ENCODE measurements at regions of chr4 and their contacts with region 1.

Region 1: GRCh38 chr4:185039508-185040273 is 21.4 kb downstream of the HELT start:
- DNase-seq: peak; percentile 52 to 71 (median 66)
- ATAC-seq: peak; percentile 88
- H3K4me3 ChIP-seq: no peak overlapping the region
- H3K27ac ChIP-seq: no peak overlapping the region
- H3K4me1 ChIP-seq: peaks cover 6% of the 10 kb centered on the region
- H3K27me3 ChIP-seq: no peaks in the 10 kb centered on the region
- CTCF ChIP-seq: peak; percentile 72 to 90 (median 86)
- POLR2A ChIP-seq: no peak

Region 2: DNA sequence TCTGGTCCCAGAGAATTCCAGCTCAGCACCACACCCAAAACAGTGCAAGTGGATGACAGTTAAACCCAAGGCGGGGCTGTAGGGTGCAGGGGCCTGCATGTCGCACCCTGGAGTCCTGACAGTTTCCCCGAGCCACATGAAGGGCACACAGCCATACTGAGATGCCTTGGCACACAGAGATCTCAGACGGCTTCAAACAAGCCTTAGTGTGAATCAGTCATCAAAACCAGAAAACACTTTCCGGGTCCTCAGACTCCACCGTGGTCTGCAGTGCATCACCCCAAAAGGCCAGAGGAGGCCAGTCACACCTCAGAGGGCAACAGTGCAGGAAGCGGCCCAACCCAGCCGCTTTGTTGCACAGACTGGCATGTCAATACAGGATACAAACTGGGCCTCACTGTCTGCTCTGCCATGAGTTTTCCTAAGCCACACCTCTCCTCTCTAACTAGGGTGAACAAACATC is 757.4 kb before region 1 on chr4:
- intact Hi-C with region 1: no loop called
- DNase-seq: peak in 1 of 4 donors; percentile 28
- ATAC-seq: peak; percentile 55
- H3K4me3 ChIP-seq: no peak overlapping the region
- H3K27ac ChIP-seq: no peak overlapping the region
- H3K4me1 ChIP-seq: peaks cover 6% of the 10 kb centered on the region
- H3K27me3 ChIP-seq: no peaks in the 10 kb centered on the region
- CTCF ChIP-seq: peak in 1 of 7 experiments; percentile 6
- POLR2A ChIP-seq: no peak

Region 3: DNA sequence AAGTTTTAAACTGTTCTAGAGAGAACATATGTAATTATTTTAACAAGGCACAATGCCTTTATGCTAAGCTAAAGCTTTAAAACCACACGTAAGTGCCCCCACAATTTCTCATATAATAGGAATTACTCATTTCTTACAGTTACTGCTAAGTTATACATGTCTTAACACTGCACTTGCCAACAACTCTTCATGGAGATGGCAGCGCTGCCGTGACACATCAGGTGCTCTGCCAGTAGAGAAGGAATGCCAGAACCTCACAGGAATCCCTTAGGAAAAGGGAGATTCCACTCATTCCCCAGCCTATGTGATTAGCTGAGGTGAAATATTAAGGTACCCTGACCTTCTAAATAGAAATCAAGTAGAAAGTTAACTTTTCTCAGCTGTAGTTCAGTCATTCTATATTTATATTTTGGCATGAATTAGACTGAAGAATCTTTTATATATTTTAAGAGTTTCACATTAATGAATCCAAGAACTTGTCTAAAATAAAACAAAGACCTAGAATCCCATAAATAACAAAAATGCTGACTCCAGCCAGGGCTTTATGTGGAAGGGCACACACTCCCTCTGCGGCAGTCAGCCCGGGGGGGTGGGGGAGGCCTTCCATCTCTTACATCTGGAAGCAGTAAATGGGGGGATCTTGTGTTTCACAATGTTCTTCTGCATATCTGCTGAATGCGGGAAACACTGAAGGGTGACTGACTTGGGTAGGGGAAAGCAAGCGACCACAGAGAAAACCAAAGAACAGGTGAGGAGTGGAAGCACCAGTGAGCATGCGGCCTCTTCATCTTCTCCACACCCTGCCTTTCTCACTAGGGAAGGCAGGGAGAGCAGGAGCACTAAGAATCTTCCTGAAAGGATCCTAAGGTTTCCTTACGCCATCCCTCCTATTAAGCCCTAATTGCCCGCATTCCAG is 237.7 kb before region 1 on chr4:
- intact Hi-C with region 1: no loop called
- DNase-seq: no peak
- ATAC-seq: no peak
- H3K4me3 ChIP-seq: no peak overlapping the region
- H3K27ac ChIP-seq: no peak overlapping the region
- H3K4me1 ChIP-seq: peaks cover 35% of the 10 kb centered on the region
- H3K27me3 ChIP-seq: no peaks in the 10 kb centered on the region
- CTCF ChIP-seq: no peak
- POLR2A ChIP-seq: no peak

Region 4: GRCh38 chr4:185096032-185096653 is 56.5 kb after region 1 on chr4:
- intact Hi-C with region 1: loop called (anchors 10 kb)
- DNase-seq: peak; percentile 58 to 70 (median 64)
- ATAC-seq: peak; percentile 53
- H3K4me3 ChIP-seq: no peak overlapping the region
- H3K27ac ChIP-seq: no peak overlapping the region
- H3K4me1 ChIP-seq: no peaks in the 10 kb centered on the region
- H3K27me3 ChIP-seq: no peaks in the 10 kb centered on the region
- CTCF ChIP-seq: peak; percentile 26 to 81 (median 67)
- POLR2A ChIP-seq: no peak

Region 5: DNA sequence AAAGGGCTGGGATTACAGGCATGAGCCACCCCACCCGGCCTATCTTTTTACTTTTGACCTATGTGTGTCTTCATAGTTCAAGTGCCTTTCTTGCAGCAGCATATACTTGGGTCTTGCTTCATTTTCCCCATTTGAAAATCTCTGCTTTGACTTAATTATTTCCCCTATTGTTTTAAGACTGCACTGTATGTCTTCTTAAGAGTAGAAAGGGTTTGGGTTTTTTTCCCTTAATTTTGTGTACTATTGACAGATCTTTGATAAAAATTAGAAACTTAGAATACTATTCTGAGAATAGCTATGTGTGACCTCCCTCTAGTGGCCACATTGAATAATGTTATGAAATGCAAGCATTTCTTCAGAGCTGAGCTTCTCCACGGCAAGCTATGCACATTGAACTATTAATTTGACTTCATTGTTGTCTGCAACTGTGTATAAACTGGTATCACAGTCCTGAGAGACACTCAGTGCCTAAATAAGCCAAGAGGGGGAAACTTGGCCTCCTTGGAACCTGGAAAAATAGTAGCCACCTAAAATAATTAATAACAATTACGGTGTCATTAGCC is 94.7 kb after region 1 on chr4:
- intact Hi-C with region 1: loop called (anchors 5 kb)
- DNase-seq: peak in 1 of 4 donors; percentile 27
- ATAC-seq: peak; percentile 85
- H3K4me3 ChIP-seq: no peak overlapping the region
- H3K27ac ChIP-seq: no peak overlapping the region
- H3K4me1 ChIP-seq: no peaks in the 10 kb centered on the region
- H3K27me3 ChIP-seq: no peaks in the 10 kb centered on the region
- CTCF ChIP-seq: peak in 6 of 7 experiments; percentile 63 to 86 (median 74)
- POLR2A ChIP-seq: no peak